Activated naive CD4-positive, alpha-beta T cell treated with anti-CD3 and anti-CD28 coated beads for 36 hours (primary cell): ENCODE measurements at regions of chr6 and their contacts with region 1.

Region 1: DNA sequence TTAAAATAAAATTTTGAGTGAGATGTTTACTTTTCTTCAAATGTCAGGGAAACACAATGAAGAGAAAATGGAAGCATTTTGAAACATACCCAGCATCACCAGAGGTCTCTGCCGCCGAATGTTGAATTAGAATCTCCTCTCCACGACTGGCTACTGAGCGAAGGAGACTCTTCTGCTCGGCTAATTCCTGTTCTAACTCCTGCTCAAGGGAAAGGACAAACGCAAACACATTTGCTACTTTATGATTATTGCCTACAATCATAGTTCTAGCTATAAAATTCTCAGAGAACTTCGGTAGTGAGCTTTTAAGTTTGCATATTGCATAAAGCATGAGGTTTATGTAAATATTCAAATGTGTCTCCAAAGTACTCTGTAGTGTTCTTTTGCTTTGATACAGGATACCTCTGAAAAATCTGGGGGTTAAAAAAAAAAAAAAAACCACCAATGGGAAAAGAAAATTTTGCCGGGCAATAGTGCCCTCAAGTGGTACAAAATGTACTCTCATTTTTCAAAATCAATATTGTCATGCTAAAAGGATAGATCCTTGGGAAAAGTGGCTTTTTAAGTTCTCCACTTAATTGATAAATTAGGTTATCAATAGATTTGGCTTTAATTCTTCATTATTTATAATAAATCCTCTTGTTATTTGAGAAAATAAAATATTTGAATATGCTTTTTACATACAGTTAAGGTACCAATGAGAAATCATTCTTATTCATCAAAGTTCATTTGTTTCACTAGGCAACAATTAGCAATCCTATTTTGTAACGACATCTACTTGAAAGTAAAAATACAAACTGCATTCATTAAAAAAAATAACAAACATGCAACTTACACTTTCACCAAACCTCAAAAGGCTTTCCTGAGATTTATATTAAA is 369.0 kb downstream of the SYNE1 start:
- DNase-seq: peak; percentile 53
- H3K4me3 Mint-ChIP-seq: no peak overlapping the region
- H3K27ac Mint-ChIP-seq: no peak overlapping the region
- H3K4me1 Mint-ChIP-seq: no peaks in the 10 kb centered on the region
- H3K27me3 Mint-ChIP-seq: no peaks in the 10 kb centered on the region

Region 2: DNA sequence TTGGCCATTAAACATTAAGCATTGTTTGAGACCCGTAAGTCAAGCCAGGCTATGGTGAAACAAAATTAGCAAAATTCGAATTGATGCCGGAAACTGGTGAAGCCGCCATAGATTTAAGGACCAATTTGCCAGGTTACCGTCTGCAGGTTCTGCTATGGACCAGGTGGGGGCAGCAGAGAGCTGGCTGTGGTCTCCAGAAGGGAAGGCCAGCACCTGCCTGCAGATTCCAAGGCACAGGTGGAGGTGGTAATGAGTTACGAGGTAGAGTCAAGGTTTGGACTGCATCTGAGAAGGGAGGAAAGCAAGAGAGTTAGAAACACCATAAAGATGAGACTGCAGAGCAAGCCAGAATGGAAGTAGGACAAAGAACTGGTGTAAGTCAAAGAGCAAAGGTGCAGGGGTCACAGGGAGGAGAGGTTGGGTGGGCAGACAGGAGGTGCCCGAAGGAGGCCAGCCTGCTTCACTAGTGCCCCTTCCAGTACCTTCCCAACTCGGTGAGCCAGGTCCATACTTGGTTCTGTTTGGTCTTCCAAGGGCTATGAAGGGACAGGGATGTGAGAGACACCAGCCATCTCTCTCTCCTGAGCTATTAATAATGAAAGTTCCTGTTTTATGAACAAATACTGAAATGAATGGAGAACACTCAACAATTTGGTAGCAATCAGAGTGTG is 592.3 kb before region 1 on chr6:
- CTCF ChIA-PET with region 1: no interaction called
- intact Hi-C with region 1: loop called (anchors 1 kb)
- DNase-seq: peak; percentile 69
- H3K4me3 Mint-ChIP-seq: no peak overlapping the region
- H3K27ac Mint-ChIP-seq: no peak overlapping the region
- H3K4me1 Mint-ChIP-seq: peaks cover 8% of the 10 kb centered on the region
- H3K27me3 Mint-ChIP-seq: no peaks in the 10 kb centered on the region

Region 3: DNA sequence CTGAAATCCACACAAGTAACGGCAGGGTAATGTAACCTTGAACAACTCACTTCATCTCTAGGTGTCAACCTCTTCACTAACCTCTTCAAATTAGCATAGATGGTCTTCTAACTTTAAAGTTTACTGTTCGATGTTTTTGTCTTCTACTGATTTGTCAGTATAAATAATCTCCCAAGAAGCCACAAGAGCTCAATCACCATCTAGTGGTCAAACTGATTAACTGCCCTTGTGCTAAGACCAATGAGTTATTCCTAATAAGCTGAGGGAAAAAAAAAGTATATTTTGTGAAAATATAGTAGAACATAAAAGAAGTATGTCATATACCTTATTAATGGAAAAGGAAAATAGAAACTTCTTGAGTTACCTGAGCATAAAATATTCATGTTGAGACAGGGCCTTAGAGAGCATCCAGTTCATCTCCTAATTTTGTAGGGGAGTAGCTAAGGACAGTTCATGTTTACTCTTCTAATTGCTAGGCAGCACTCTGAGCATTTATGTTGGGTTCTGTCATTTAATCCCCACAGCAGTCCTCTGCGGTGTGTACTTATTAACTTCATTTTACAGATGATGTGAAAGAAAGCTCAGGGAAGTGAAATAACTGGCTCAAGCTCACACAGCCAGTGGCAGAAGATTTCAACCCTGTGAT is 143.7 kb before region 1 on chr6:
- CTCF ChIA-PET with region 1: interaction called, 5 read pairs
- intact Hi-C with region 1: loop called (anchors 1 kb)
- DNase-seq: no peak
- H3K4me3 Mint-ChIP-seq: no peak overlapping the region
- H3K27ac Mint-ChIP-seq: peak overlapping the region; percentile 39
- H3K4me1 Mint-ChIP-seq: no peaks in the 10 kb centered on the region
- H3K27me3 Mint-ChIP-seq: no peaks in the 10 kb centered on the region

Region 4: DNA sequence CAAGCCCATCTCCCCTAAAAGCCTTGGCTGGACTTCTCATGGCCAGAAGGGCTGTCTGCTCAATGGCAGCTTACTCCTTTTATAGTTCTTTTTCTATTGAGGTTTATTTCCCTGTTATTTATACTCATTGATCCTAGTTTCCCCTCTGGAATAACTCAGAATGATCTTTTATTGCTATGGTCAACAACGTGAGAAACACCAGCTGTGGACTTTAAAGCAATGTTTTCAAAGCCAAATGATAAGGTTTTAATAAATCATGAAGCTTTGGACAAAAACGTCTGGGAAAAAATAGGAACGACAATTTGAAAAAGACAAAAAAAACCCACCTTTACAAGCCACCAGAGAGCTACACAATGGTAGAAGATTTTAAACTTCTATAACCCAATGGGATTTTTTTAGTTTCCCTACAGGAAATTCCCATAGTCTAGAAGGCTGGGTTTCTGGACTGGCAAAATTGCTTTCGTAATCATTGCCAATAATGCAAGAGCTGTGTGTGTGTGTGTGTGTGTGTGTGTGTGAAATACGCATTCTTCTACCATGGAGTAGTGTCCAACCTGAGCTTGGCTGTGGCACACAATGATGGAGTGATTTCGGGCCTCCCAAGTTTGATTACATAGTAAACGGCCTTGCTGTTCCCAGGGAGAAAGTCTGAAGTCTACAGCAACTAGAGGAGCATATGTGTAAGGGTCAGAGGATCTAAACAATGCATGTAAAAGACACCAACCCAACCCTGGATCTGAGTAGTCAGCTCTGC is 27.0 kb before region 1 on chr6:
- CTCF ChIA-PET with region 1: interaction called, 10 read pairs
- intact Hi-C with region 1: no loop called
- DNase-seq: no peak
- H3K4me3 Mint-ChIP-seq: no peak overlapping the region
- H3K27ac Mint-ChIP-seq: no peak overlapping the region
- H3K4me1 Mint-ChIP-seq: peaks cover 3% of the 10 kb centered on the region
- H3K27me3 Mint-ChIP-seq: no peaks in the 10 kb centered on the region

Region 5: GRCh38 chr6:152356451-152357061 is 88.3 kb after region 1 on chr6:
- CTCF ChIA-PET with region 1: no interaction called
- intact Hi-C with region 1: loop called (anchors 1 kb)
- DNase-seq: peak; percentile 16
- H3K4me3 Mint-ChIP-seq: no peak overlapping the region
- H3K27ac Mint-ChIP-seq: no peak overlapping the region
- H3K4me1 Mint-ChIP-seq: peaks cover 2% of the 10 kb centered on the region
- H3K27me3 Mint-ChIP-seq: no peaks in the 10 kb centered on the region

Region 6: GRCh38 chr6:152605342-152605741 is 337.1 kb after region 1 on chr6:
- CTCF ChIA-PET with region 1: no interaction called
- intact Hi-C with region 1: no loop called
- DNase-seq: no peak
- H3K4me3 Mint-ChIP-seq: no peak overlapping the region
- H3K27ac Mint-ChIP-seq: no peak overlapping the region
- H3K4me1 Mint-ChIP-seq: no peaks in the 10 kb centered on the region
- H3K27me3 Mint-ChIP-seq: peaks cover 3% of the 10 kb centered on the region